A549 (cell line): ENCODE measurements at regions of chr3 and their contacts with region 1.

Region 1: GRCh38 chr3:107064445-107065060 is 312.7 kb upstream of the CCDC54 start:
- DNase-seq: peak; percentile 62 to 69
- ATAC-seq: peak; percentile 88 to 93
- H3K4me3 ChIP-seq: no peak overlapping the region
- H3K27ac ChIP-seq: no peak overlapping the region
- H3K4me1 ChIP-seq: 0 out of 3 replicates have a peak, but pooled peaks cover 11% of the 10 kb centered on the region
- CTCF ChIP-seq: peak; percentile 87
- EP300 ChIP-seq: no peak
- POLR2A ChIP-seq: no peak
- RAD21 ChIP-seq: peak; percentile 83 to 86

Region 2: GRCh38 chr3:106783231-106783630 is 281.3 kb before region 1 on chr3:
- CTCF ChIA-PET with region 1: no interaction called
- POLR2A ChIA-PET with region 1: no interaction called
- DNase-seq: no peak
- ATAC-seq: no peak
- H3K4me3 ChIP-seq: no peak overlapping the region
- H3K27ac ChIP-seq: no peak overlapping the region
- H3K4me1 ChIP-seq: no peaks in the 10 kb centered on the region
- CTCF ChIP-seq: no peak
- EP300 ChIP-seq: no peak
- POLR2A ChIP-seq: no peak
- RAD21 ChIP-seq: no peak

Region 3: DNA sequence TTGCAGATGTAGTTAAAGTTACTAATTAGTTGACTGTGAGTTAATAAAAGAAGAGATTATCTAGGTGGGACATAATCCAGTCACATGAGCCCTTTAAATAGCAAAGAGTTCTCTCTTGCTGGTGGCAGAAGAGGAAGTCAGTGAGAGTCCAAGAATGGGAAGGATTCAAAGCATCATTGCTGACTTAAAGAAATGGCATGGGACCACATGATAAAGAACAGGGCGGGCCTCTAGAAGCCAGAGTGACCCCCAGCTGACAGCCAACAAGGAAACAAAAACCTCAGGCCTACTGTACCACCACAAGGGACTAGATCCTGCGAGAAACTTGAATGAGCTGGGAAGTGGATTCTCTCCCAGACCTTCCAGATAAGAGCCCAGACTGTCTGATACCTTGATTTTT is 134.5 kb before region 1 on chr3:
- CTCF ChIA-PET with region 1: no interaction called
- POLR2A ChIA-PET with region 1: no interaction called
- DNase-seq: no peak
- ATAC-seq: no peak
- H3K4me3 ChIP-seq: no peak overlapping the region
- H3K27ac ChIP-seq: no peak overlapping the region
- H3K4me1 ChIP-seq: no peaks in the 10 kb centered on the region
- CTCF ChIP-seq: no peak
- EP300 ChIP-seq: no peak
- POLR2A ChIP-seq: no peak
- RAD21 ChIP-seq: no peak

Region 4: DNA sequence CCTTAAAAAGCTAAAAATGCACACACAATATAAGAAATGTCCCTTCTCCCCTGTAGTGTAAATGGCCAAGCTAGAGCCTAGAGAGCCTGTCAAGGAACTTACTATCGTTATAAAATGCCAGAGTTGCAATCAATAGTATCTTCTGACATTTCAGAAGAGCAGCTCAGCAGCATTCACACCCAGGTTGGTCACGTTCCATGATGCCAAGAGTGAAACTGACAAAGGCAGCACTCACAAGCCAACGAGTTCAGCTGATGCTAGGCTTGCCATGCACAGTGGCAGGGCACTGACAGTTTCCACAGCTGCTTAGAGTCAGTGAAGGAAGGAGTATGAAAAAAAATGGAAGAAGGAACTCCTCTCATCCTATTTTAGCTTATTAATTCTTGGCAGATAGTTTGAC is 18.8 kb before region 1 on chr3:
- CTCF ChIA-PET with region 1: interaction called, 12 read pairs
- POLR2A ChIA-PET with region 1: no interaction called
- DNase-seq: no peak
- ATAC-seq: no peak
- H3K4me3 ChIP-seq: no peak overlapping the region
- H3K27ac ChIP-seq: no peak overlapping the region
- H3K4me1 ChIP-seq: no peaks in the 10 kb centered on the region
- CTCF ChIP-seq: no peak
- EP300 ChIP-seq: no peak
- POLR2A ChIP-seq: no peak
- RAD21 ChIP-seq: no peak

Region 5: GRCh38 chr3:107077391-107077790 is 12.8 kb after region 1 on chr3:
- CTCF ChIA-PET with region 1: interaction called, 21 read pairs
- POLR2A ChIA-PET with region 1: no interaction called
- DNase-seq: no peak
- ATAC-seq: no peak
- H3K4me3 ChIP-seq: no peak overlapping the region
- H3K27ac ChIP-seq: no peak overlapping the region
- H3K4me1 ChIP-seq: no peaks in the 10 kb centered on the region
- CTCF ChIP-seq: no peak
- EP300 ChIP-seq: no peak
- POLR2A ChIP-seq: no peak
- RAD21 ChIP-seq: no peak

Region 6: GRCh38 chr3:107128946-107129345 is 64.4 kb after region 1 on chr3:
- CTCF ChIA-PET with region 1: no interaction called
- POLR2A ChIA-PET with region 1: no interaction called
- DNase-seq: no peak
- ATAC-seq: no peak
- H3K4me3 ChIP-seq: no peak overlapping the region
- H3K27ac ChIP-seq: no peak overlapping the region
- H3K4me1 ChIP-seq: no peaks in the 10 kb centered on the region
- CTCF ChIP-seq: no peak
- EP300 ChIP-seq: no peak
- POLR2A ChIP-seq: no peak
- RAD21 ChIP-seq: no peak

Region 7: GRCh38 chr3:107394502-107394901 is 329.9 kb after region 1 on chr3:
- CTCF ChIA-PET with region 1: no interaction called
- POLR2A ChIA-PET with region 1: no interaction called
- DNase-seq: no peak
- ATAC-seq: no peak
- H3K4me3 ChIP-seq: no peak overlapping the region
- H3K27ac ChIP-seq: no peak overlapping the region
- H3K4me1 ChIP-seq: no peaks in the 10 kb centered on the region
- CTCF ChIP-seq: no peak
- EP300 ChIP-seq: no peak
- POLR2A ChIP-seq: no peak
- RAD21 ChIP-seq: no peak